ENCODE measurements at regions of chr20 and their contacts with region 1.

Region 1: GRCh38 chr20:46423882-46424482 is 17.6 kb upstream of the ELMO2 start:
- DNase-seq: no peak
- ATAC-seq: 0 out of 6 replicates have a peak, but pooled peaks of 1 of the 2 experiments have one; percentile 19
- H3K4me3 ChIP-seq: no peak overlapping the region
- H3K27ac ChIP-seq: no peak overlapping the region
- H3K4me1 ChIP-seq: no peaks in the 10 kb centered on the region
- CTCF ChIP-seq: no peak
- EP300 ChIP-seq: no peak
- POLR2A ChIP-seq: no peak
- RAD21 ChIP-seq: no peak

Region 2: GRCh38 chr20:46400828-46401477 is 23.0 kb before region 1 on chr20:
- CTCF ChIA-PET with region 1: no interaction called
- POLR2A ChIA-PET with region 1: no interaction called
- DNase-seq: no peak
- ATAC-seq: no peak
- H3K4me3 ChIP-seq: no peak overlapping the region
- H3K27ac ChIP-seq: no peak overlapping the region
- H3K4me1 ChIP-seq: peaks cover 7% of the 10 kb centered on the region
- CTCF ChIP-seq: no peak
- EP300 ChIP-seq: no peak
- POLR2A ChIP-seq: no peak
- RAD21 ChIP-seq: no peak

Region 3: DNA sequence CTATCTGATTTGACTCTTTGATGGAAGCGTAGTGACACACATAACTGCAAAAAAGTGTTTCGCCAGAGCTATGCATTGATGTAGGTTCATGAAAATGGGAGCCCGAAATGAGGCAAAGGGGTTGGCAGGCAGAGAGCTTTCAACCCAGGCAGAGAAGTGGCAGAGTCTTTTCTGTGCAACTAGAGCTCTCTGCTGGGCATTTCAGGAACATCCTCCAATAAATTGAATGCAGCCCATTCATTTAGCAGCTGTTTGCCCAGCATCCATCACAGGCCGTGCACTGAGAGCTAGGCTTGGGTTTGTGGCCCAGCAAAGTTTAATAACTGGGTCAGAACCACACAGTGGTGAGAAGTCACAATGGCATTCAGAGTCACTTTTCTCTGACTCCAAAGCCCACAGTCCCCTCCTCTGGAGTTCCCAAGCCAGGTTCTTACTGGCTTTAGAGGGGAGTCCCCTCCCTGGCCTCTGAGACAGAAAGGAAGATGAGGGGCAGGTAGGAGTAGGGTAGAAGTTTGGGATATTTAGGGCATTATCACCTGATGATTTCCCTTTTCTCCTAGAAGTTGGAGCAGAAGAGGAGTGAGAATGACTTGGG is 14.3 kb after region 1 on chr20:
- CTCF ChIA-PET with region 1: interaction called, 27 read pairs
- POLR2A ChIA-PET with region 1: no interaction called
- DNase-seq: peak; percentile 50 to 65
- ATAC-seq: peak; percentile 91 to 92
- H3K4me3 ChIP-seq: no peak overlapping the region
- H3K27ac ChIP-seq: no peak overlapping the region
- H3K4me1 ChIP-seq: no peaks in the 10 kb centered on the region
- CTCF ChIP-seq: peak; percentile 49
- EP300 ChIP-seq: no peak
- POLR2A ChIP-seq: no peak
- RAD21 ChIP-seq: peak; percentile 64 to 72

Region 4: GRCh38 chr20:46464451-46464850 is 40.5 kb after region 1 on chr20:
- CTCF ChIA-PET with region 1: no interaction called
- POLR2A ChIA-PET with region 1: no interaction called
- DNase-seq: no peak
- ATAC-seq: no peak
- H3K4me3 ChIP-seq: no peak overlapping the region
- H3K27ac ChIP-seq: no peak overlapping the region
- H3K4me1 ChIP-seq: no peaks in the 10 kb centered on the region
- CTCF ChIP-seq: no peak
- EP300 ChIP-seq: no peak
- POLR2A ChIP-seq: no peak
- RAD21 ChIP-seq: no peak